ENCODE measurements at regions of chr6 and their contacts with region 1.

Region 1: GRCh38 chr6:3456755-3457466 is at the start of gene SLC22A23:
- DNase-seq: peak; percentile 63 to 84 (median 78)
- ATAC-seq: peak; percentile 81
- H3K4me3 ChIP-seq: peak within 1 kb of the TSS; percentile 66
- H3K4me3 Mint-ChIP-seq: peak within 1 kb of the TSS; percentile 76 to 95 (median 86)
- H3K27ac ChIP-seq: peak within 1 kb of the TSS; percentile 61
- H3K27ac Mint-ChIP-seq: peak within 1 kb of the TSS; percentile 32 to 91 (median 73)
- H3K4me1 ChIP-seq: peaks cover 8 to 24% of the 10 kb centered on the region in 2 donors
- H3K4me1 Mint-ChIP-seq: peaks cover 4 to 17% (median 12%) of the 10 kb centered on the region in 7 donors
- H3K27me3 ChIP-seq: peaks cover 0 to 4% of the 10 kb centered on the region in 2 donors
- H3K27me3 Mint-ChIP-seq: peaks cover 0 to 47% (median 8%) of the 10 kb centered on the region in 5 donors
- total RNA-seq, gene SLC22A23: 1.1 to 23.8 (median 20.0) TPM

Region 2: GRCh38 chr6:2853761-2854395 is 603.0 kb before region 1 on chr6:
- CTCF ChIA-PET with region 1: no interaction called
- POLR2A ChIA-PET with region 1: no interaction called
- intact Hi-C with region 1: loop called in 1 of 2 experiments (anchors 10 kb)
- DNase-seq: peak in 5 of 9 donors; percentile 23 to 70 (median 40)
- ATAC-seq: peak; percentile 61
- H3K4me3 ChIP-seq: peak overlapping the region; percentile 53
- H3K4me3 Mint-ChIP-seq: peak overlapping the region; percentile 65 to 97 (median 78)
- H3K27ac ChIP-seq: peak overlapping the region; percentile 65
- H3K27ac Mint-ChIP-seq: peak overlapping the region; percentile 79 to 100 (median 98)
- H3K4me1 ChIP-seq: peaks cover 59 to 61% of the 10 kb centered on the region in 2 donors
- H3K4me1 Mint-ChIP-seq: peaks cover 42 to 74% (median 71%) of the 10 kb centered on the region in 7 donors
- H3K27me3 ChIP-seq: no peaks in the 10 kb centered on the region
- H3K27me3 Mint-ChIP-seq: no peaks in the 10 kb centered on the region

Region 3: GRCh38 chr6:3125815-3126214 is 331.1 kb before region 1 on chr6:
- CTCF ChIA-PET with region 1: no interaction called
- POLR2A ChIA-PET with region 1: no interaction called
- intact Hi-C with region 1: loop called in 1 of 2 experiments (anchors 10 kb)
- DNase-seq: no peak
- ATAC-seq: no peak
- H3K4me3 ChIP-seq: no peak overlapping the region
- H3K4me3 Mint-ChIP-seq: no peak overlapping the region
- H3K27ac ChIP-seq: no peak overlapping the region
- H3K27ac Mint-ChIP-seq: no peak overlapping the region
- H3K4me1 ChIP-seq: no peaks in the 10 kb centered on the region
- H3K4me1 Mint-ChIP-seq: peaks cover 0 to 3% (median 0%) of the 10 kb centered on the region in 7 donors
- H3K27me3 ChIP-seq: no peaks in the 10 kb centered on the region
- H3K27me3 Mint-ChIP-seq: no peaks in the 10 kb centered on the region

Region 4: DNA sequence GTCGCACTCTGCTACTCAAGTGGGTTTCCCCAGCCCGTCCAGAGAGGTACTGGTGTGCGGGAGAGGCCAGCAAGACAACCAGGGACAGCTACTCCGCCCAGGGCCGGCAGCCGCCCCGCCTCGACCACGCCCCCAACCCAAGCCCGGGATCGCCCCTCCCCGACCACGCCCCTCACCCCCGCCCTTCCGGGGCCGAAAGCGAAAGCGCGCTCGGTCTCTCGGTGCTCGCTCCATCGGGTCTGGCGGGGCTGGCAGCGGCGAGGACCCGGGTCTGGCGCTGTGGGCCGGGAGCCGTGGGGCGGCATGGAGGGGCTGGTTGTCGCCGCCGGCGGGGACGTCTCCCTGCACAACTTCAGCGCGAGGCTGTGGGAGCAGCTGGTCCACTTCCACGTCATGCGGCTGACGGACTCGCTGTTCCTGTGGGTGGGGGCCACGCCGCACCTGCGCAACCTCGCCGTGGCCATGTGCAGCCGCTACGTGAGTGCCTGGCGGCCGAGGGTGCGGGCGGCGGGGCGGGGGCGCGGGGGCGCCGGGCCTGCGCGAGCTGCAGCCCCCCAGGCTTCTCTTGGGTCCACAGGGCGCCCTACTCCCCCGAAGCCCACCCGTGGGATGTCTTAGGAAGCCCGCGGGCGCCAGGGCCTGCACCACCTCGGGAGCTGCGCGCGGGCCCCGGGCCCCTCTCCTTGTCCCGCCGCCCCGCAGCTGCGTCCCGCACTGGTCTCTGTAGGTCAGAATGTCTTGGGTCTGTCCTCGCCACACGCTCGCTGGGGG is 198.0 kb before region 1 on chr6 and contains the start of gene PSMG4:
- CTCF ChIA-PET with region 1: no interaction called
- POLR2A ChIA-PET with region 1: interaction called, 4 read pairs
- intact Hi-C with region 1: loop called in 1 of 2 experiments (anchors 1 kb)
- DNase-seq: peak; percentile 81 to 98 (median 89)
- ATAC-seq: peak; percentile 97
- H3K4me3 ChIP-seq: peak within 1 kb of the TSS; percentile 85
- H3K4me3 Mint-ChIP-seq: peak within 1 kb of the TSS; percentile 85 to 99 (median 97)
- H3K27ac ChIP-seq: peak within 1 kb of the TSS; percentile 80
- H3K27ac Mint-ChIP-seq: peak within 1 kb of the TSS; percentile 84 to 98 (median 92)
- H3K4me1 ChIP-seq: peaks cover 19 to 26% of the 10 kb centered on the region in 2 donors
- H3K4me1 Mint-ChIP-seq: peaks cover 28 to 45% (median 42%) of the 10 kb centered on the region in 7 donors
- H3K27me3 ChIP-seq: no peaks in the 10 kb centered on the region
- H3K27me3 Mint-ChIP-seq: peaks cover 0 to 25% (median 0%) of the 10 kb centered on the region in 5 donors
- total RNA-seq, gene PSMG4: 15.6 to 45.0 (median 27.7) TPM

Region 5: DNA sequence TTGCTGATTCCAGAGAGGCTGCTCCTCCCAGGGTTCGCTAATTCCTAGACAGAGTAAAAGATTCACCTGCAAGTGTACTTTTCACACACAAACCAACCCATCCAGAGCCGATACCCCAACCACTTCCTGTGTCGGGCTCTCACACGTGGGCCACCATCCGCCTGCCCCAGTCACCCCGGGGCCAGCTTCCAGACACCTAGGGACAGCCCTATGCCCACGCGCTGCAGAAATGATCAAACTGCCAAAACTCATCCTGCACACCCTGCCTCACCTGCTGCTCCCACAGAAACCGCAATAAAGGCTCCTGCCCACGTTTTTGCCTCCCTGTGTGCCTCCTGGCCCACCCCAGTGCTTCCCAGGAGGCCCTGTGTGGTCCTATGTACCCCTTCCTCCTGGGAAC is 138.7 kb before region 1 on chr6:
- CTCF ChIA-PET with region 1: no interaction called
- POLR2A ChIA-PET with region 1: no interaction called
- intact Hi-C with region 1: no loop called
- DNase-seq: peak in 8 of 9 donors; percentile 28 to 61 (median 50)
- ATAC-seq: peak; percentile 82
- H3K4me3 ChIP-seq: peak overlapping the region; percentile 36
- H3K4me3 Mint-ChIP-seq: peak overlapping the region; percentile 3 to 83 (median 73)
- H3K27ac ChIP-seq: no peak overlapping the region
- H3K27ac Mint-ChIP-seq: peak overlapping the region in 7 of 9 donors; percentile 53 to 82 (median 66)
- H3K4me1 ChIP-seq: peaks cover 7 to 24% of the 10 kb centered on the region in 2 donors
- H3K4me1 Mint-ChIP-seq: peaks cover 12 to 38% (median 30%) of the 10 kb centered on the region in 7 donors
- H3K27me3 ChIP-seq: no peaks in the 10 kb centered on the region
- H3K27me3 Mint-ChIP-seq: peaks cover 0 to 18% (median 0%) of the 10 kb centered on the region in 5 donors

Region 6: DNA sequence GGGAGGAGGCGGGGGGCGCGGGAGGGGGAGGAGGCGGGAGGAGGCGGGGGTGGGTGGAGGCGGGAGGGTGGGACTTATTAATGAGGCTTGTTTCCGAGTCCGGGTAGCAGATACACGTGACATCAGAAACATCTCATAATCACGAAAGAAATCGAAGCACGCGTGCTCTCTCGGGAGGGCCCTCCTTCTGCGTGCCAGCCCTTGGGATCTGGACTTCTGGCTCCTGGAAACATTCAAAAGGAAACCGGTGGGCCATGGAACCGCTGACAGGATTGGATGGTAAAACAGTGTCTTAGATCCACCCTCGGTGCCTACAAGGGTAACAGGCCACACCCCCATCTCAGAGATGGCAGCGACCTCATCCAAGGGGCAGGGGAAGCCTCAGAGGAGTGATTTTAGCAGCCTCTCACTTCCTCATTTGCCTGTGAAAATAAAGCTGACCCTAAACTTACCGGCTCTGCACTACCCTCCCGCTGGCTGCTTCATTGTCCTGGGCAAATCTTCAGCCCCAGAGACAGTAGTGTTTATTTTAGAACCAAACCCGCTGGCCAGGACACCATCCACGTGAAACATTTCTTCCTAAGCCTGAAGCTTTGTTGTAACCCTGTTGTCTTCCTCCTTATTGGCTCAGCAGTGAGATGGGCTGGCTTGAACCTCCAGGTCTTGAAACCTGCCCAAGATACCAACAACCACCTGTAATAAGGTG is 100.7 kb before region 1 on chr6:
- CTCF ChIA-PET with region 1: interaction called, 3 read pairs
- POLR2A ChIA-PET with region 1: interaction called, 6 read pairs
- intact Hi-C with region 1: loop called in 1 of 2 experiments (anchors 1 kb)
- DNase-seq: peak in 8 of 9 donors; percentile 31 to 86 (median 78)
- ATAC-seq: peak; percentile 89
- H3K4me3 ChIP-seq: peak overlapping the region; percentile 65
- H3K4me3 Mint-ChIP-seq: peak overlapping the region; percentile 76 to 99 (median 88)
- H3K27ac ChIP-seq: peak overlapping the region; percentile 78
- H3K27ac Mint-ChIP-seq: peak overlapping the region in 8 of 9 donors; percentile 92 to 100 (median 98)
- H3K4me1 ChIP-seq: peaks cover 7 to 27% of the 10 kb centered on the region in 2 donors
- H3K4me1 Mint-ChIP-seq: peaks cover 14 to 79% (median 58%) of the 10 kb centered on the region in 7 donors
- H3K27me3 ChIP-seq: no peaks in the 10 kb centered on the region
- H3K27me3 Mint-ChIP-seq: peaks cover 0 to 43% (median 0%) of the 10 kb centered on the region in 5 donors

Region 7: GRCh38 chr6:3410385-3411360 is 46.2 kb before region 1 on chr6:
- CTCF ChIA-PET with region 1: interaction called, 15 read pairs
- POLR2A ChIA-PET with region 1: interaction called, 9 read pairs
- intact Hi-C with region 1: loop called (anchors 1 kb)
- DNase-seq: peak; percentile 30 to 72 (median 60)
- ATAC-seq: peak; percentile 78
- H3K4me3 ChIP-seq: no peak overlapping the region
- H3K4me3 Mint-ChIP-seq: no peak overlapping the region
- H3K27ac ChIP-seq: no peak overlapping the region
- H3K27ac Mint-ChIP-seq: peak overlapping the region in 6 of 9 donors; percentile 34 to 84 (median 66)
- H3K4me1 ChIP-seq: peaks cover 0 to 11% of the 10 kb centered on the region in 2 donors
- H3K4me1 Mint-ChIP-seq: peaks cover 2 to 28% (median 20%) of the 10 kb centered on the region in 7 donors
- H3K27me3 ChIP-seq: no peaks in the 10 kb centered on the region
- H3K27me3 Mint-ChIP-seq: peaks cover 0 to 4% (median 0%) of the 10 kb centered on the region in 5 donors

Region 8: DNA sequence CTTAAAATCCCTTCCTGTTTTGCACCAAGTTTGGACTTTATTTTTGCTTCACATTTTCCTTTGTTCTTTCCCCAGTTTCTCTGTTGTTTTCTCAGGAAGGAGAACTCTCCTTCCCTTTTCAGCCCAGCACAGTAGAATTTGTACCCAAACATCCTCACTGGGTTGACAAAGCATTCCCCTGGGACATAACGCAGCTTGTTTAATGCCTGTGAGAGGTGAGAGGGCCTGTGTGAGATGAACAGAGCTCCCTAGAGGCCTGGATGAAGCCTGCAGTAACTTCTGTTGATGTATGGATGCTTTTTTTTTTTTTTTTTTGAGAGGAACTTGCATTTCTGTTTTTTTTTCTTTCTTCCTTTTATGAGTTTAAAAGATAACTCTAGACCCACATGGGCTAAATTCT is 104.8 kb after region 1 on chr6:
- CTCF ChIA-PET with region 1: no interaction called
- POLR2A ChIA-PET with region 1: no interaction called
- intact Hi-C with region 1: no loop called
- DNase-seq: no peak
- ATAC-seq: no peak
- H3K4me3 ChIP-seq: no peak overlapping the region
- H3K4me3 Mint-ChIP-seq: no peak overlapping the region
- H3K27ac ChIP-seq: no peak overlapping the region
- H3K27ac Mint-ChIP-seq: peak overlapping the region in 1 of 9 donors; percentile 2
- H3K4me1 ChIP-seq: no peaks in the 10 kb centered on the region
- H3K4me1 Mint-ChIP-seq: peaks cover 0 to 4% (median 0%) of the 10 kb centered on the region in 7 donors
- H3K27me3 ChIP-seq: no peaks in the 10 kb centered on the region
- H3K27me3 Mint-ChIP-seq: peaks cover 6 to 13% (median 12%) of the 10 kb centered on the region in 5 donors

Region 9: GRCh38 chr6:3732345-3733141 is 275.6 kb after region 1 on chr6:
- CTCF ChIA-PET with region 1: no interaction called
- POLR2A ChIA-PET with region 1: no interaction called
- intact Hi-C with region 1: loop called in 1 of 2 experiments (anchors 2 kb)
- DNase-seq: peak; percentile 34 to 70 (median 60)
- ATAC-seq: peak; percentile 85
- H3K4me3 ChIP-seq: no peak overlapping the region
- H3K4me3 Mint-ChIP-seq: peak overlapping the region in 1 of 10 donors; percentile 42
- H3K27ac ChIP-seq: no peak overlapping the region
- H3K27ac Mint-ChIP-seq: peak overlapping the region in 1 of 9 donors; percentile 88
- H3K4me1 ChIP-seq: no peaks in the 10 kb centered on the region
- H3K4me1 Mint-ChIP-seq: peaks cover 0 to 4% (median 3%) of the 10 kb centered on the region in 7 donors
- H3K27me3 ChIP-seq: no peaks in the 10 kb centered on the region
- H3K27me3 Mint-ChIP-seq: peaks cover 6 to 22% (median 15%) of the 10 kb centered on the region in 5 donors

Measured in naive thymus-derived CD4-positive, alpha-beta T cell (primary cell).